Caco-2 (cell line): ENCODE measurements at regions of chr10 and their contacts with region 1.

Region 1: DNA sequence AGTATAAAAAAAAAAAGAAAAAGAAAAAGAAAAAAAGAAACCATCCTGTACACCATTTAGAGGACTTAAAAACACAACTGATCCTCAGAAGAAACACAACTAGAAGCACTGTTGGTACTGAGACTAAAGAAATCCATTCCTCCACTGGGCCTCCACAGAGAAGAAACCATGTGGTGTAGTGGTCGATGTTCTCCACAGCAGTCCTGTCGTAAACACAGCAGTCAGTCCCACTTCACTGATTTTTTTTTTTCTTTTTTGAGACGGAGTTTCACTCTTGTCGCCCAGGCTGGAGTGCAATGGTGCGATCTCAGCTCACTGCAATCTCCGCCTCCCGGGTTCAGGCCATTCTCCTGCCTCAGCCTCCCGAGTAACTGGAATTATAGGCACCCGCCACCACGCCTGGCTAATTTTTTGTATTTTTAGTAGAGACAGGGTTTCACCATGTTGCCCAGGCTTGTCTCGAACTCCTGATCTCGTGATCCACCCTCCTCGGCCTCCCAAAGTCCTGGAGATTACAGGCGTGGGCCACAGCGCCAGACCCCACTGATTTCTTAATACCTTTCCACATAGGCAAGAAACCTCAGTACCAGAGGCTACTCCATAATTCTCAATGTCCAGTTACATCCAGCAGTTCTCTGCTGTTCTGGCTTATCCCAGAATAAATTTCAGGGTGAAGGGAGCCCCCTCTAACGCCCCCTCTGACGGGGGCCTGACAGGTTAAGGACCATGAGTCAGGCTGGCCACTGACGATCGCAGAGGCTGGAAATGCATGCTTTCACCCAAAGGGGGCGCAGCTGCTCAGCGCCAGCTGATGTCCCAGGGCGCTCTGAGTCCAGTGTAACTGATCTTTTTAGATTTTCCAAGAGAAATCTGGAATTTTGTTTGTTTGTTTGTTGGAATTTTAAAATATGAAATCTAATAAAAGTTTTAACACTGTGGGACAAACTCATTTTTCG is 24.8 kb upstream of the FFAR4 start:
- DNase-seq: peak in 1 of 2 experiments; percentile 51
- H3K4me3 ChIP-seq: no peak overlapping the region
- H3K4me3 Mint-ChIP-seq: no peak overlapping the region
- H3K27ac Mint-ChIP-seq: no peak overlapping the region
- H3K4me1 ChIP-seq: peaks cover 9% of the 10 kb centered on the region
- H3K4me1 Mint-ChIP-seq: peaks cover 23% of the 10 kb centered on the region
- H3K27me3 ChIP-seq: no peaks in the 10 kb centered on the region
- H3K27me3 Mint-ChIP-seq: no peaks in the 10 kb centered on the region
- CTCF ChIP-seq: peak; percentile 65 to 70

Region 2: GRCh38 chr10:93680412-93681047 is 138.8 kb after region 1 on chr10:
- CTCF ChIA-PET with region 1: interaction called, 6 read pairs
- POLR2A ChIA-PET with region 1: no interaction called
- intact Hi-C with region 1: loop called (anchors 1 kb)
- DNase-seq: peak in 1 of 2 experiments; percentile 56
- H3K4me3 ChIP-seq: no peak overlapping the region
- H3K4me3 Mint-ChIP-seq: no peak overlapping the region
- H3K27ac Mint-ChIP-seq: no peak overlapping the region
- H3K4me1 ChIP-seq: peaks cover 16% of the 10 kb centered on the region; the same call in 1 of the 2 replicates
- H3K4me1 Mint-ChIP-seq: peaks cover 7% of the 10 kb centered on the region
- H3K27me3 ChIP-seq: no peaks in the 10 kb centered on the region
- H3K27me3 Mint-ChIP-seq: no peaks in the 10 kb centered on the region
- CTCF ChIP-seq: peak; percentile 30 to 66